Esophagus squamous epithelium (tissue), 5 donors: ENCODE measurements at regions of chr5 and their contacts with region 1.

Region 1: GRCh38 chr5:95664204-95664786 is 17.7 kb downstream of the RFESD start:
- DNase-seq: no peak
- H3K4me3 ChIP-seq: no peak overlapping the region
- H3K27ac ChIP-seq: peak overlapping the region in 2 of 4 donors; percentile 1 to 45
- H3K4me1 ChIP-seq: peaks cover 0 to 16% (median 3%) of the 10 kb centered on the region in 3 donors
- H3K27me3 ChIP-seq: no peaks in the 10 kb centered on the region
- CTCF ChIP-seq: peak; percentile 49 to 85 (median 77)
- POLR2A ChIP-seq: no peak

Region 2: GRCh38 chr5:95730730-95731570 is 66.7 kb after region 1 on chr5 and contains the start of gene RHOBTB3:
- intact Hi-C with region 1: loop called (anchors 10 kb)
- DNase-seq: peak; percentile 4
- H3K4me3 ChIP-seq: peak within 1 kb of the TSS; percentile 65 to 95 (median 77)
- H3K27ac ChIP-seq: peak within 1 kb of the TSS; percentile 82 to 96 (median 90)
- H3K4me1 ChIP-seq: peaks cover 5 to 65% (median 12%) of the 10 kb centered on the region in 3 donors
- H3K27me3 ChIP-seq: peaks cover 0 to 17% (median 0%) of the 10 kb centered on the region in 4 donors
- CTCF ChIP-seq: peak in 1 of 6 experiments; percentile 2
- POLR2A ChIP-seq: peak in 2 of 4 donors; percentile 81 to 90
- total RNA-seq, gene RHOBTB3: 4.7 to 59.3 (median 13.6) TPM